Activated CD4-positive, alpha-beta memory T cell treated with anti-CD3 and anti-CD28 coated beads, Interleukin-2, amount 10 ng/mL, durations not matched to agents 7 days and 5 days (primary cell): ENCODE measurements at regions of chr1 and their contacts with region 1.

Region 1: GRCh38 chr1:226407497-226408284 is at the start of gene PARP1:
- DNase-seq: peak; percentile 92
- H3K4me3 Mint-ChIP-seq: peak within 1 kb of the TSS; percentile 85
- H3K27ac Mint-ChIP-seq: peak within 1 kb of the TSS; percentile 89
- H3K4me1 Mint-ChIP-seq: peaks cover 35% of the 10 kb centered on the region
- H3K27me3 Mint-ChIP-seq: peaks cover 2% of the 10 kb centered on the region
- total RNA-seq, gene PARP1: 191 to 194 TPM

Region 2: GRCh38 chr1:226308723-226309315 is 98.9 kb before region 1 on chr1 and contains the start of gene LIN9:
- CTCF ChIA-PET with region 1: interaction called, 13 read pairs
- POLR2A ChIA-PET with region 1: interaction called, 21 read pairs
- DNase-seq: peak; percentile 94
- H3K4me3 Mint-ChIP-seq: peak within 1 kb of the TSS; percentile 89
- H3K27ac Mint-ChIP-seq: peak within 1 kb of the TSS; percentile 87
- H3K4me1 Mint-ChIP-seq: peaks cover 32% of the 10 kb centered on the region
- H3K27me3 Mint-ChIP-seq: peaks cover 13% of the 10 kb centered on the region
- total RNA-seq, gene LIN9: 10.4 to 11.5 TPM

Region 3: DNA sequence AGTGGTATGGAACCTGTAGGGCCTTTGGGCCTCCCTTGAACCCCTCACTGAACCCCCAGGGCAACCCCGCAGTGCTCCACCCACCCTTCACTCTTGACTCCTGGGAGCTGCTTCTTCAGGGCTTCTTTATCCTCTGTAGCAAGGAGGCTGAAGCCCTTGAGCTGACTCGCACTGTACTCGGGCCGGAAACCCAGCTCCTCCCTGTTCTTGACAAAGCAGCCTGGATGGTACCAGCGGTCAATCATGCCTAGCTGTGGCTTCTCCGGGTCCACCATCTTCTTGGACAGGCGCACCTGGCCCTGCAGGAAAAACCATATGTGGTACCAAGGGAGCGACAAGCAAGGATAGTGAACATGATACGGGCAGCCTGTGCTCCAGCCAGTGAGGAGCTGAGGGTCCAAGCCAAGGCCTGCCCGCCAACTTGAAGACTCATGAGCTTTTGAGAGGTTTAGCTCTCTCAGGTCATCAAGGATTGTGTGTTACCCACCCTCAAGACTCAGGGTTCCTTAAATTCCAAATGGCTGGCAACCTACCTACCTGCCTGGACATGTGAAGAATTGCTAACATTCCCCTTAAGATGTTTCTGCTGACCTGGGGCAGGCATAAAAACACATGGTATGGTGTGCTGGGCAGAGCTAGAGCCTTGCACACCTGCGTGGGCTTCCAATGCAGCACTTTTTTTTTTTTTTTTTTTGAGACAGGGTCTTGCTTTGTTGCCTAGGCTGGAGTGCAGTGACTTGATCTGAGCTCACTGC is 17.2 kb before region 1 on chr1:
- CTCF ChIA-PET with region 1: interaction called, 13 read pairs
- POLR2A ChIA-PET with region 1: interaction called, 29 read pairs
- DNase-seq: no peak
- H3K4me3 Mint-ChIP-seq: no peak overlapping the region
- H3K27ac Mint-ChIP-seq: no peak overlapping the region
- H3K4me1 Mint-ChIP-seq: peaks cover 4% of the 10 kb centered on the region
- H3K27me3 Mint-ChIP-seq: no peaks in the 10 kb centered on the region

Region 4: DNA sequence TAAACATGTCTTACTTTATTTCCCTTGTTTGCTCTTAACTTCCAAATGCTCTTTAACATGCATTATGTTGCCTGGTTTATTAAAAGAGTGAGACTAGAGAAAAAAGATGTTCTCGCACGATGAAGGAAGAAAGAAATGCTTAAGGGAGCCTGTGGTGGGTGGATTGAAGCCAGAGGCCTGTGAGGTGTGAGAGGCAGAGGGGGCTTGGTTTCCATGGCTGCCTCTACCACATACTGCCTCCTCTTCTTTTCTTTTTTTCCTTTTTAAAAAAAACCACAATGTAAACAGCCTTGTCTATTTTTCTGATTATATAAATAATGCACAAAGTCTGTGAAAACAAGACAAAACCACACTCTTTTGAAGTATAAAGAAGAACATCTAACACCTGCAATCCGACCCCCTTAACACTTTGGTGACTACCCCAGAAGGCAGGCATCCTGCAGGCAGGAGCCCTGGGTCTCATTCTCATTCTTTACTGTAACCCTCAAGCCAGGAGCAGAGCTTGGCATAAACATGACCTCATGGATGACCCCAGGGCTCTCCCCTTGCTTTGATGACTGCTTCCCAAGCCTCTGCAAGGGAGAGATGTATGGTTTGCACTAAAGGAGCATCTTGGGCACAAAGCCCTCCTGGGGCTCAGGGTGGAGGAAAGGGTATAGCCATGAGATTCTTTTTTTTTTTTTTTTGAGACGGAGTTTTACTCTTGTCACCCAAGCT is 10.3 kb after region 1 on chr1:
- CTCF ChIA-PET with region 1: interaction called, 69 read pairs
- POLR2A ChIA-PET with region 1: interaction called, 15 read pairs
- DNase-seq: no peak
- H3K4me3 Mint-ChIP-seq: no peak overlapping the region
- H3K27ac Mint-ChIP-seq: no peak overlapping the region
- H3K4me1 Mint-ChIP-seq: peaks cover 3% of the 10 kb centered on the region
- H3K27me3 Mint-ChIP-seq: peaks cover 9% of the 10 kb centered on the region

Region 5: DNA sequence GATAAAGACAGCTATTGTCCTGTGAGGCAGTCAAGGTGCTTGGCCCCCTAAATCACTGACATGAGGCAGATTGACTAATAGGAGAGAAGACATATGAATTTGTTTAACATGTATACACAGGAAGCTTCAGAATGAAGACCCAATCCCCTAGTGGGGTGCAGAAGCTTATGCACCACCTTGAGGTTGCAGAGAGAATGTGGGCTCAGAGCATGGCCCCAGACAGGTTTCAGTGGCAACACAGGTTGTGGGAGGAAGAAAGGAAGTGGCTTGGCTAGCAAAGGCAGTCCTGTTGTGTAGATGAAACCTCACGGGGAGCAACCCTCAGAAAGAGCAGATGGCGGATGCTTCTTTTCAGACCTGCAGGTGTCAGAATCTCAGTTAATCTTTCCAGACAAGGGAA is 37.2 kb after region 1 on chr1:
- CTCF ChIA-PET with region 1: interaction called, 41 read pairs
- POLR2A ChIA-PET with region 1: interaction called, 26 read pairs
- DNase-seq: peak; percentile 83
- H3K4me3 Mint-ChIP-seq: no peak overlapping the region
- H3K27ac Mint-ChIP-seq: peak overlapping the region; percentile 27
- H3K4me1 Mint-ChIP-seq: peaks cover 31% of the 10 kb centered on the region
- H3K27me3 Mint-ChIP-seq: peaks cover 21% of the 10 kb centered on the region

Region 6: DNA sequence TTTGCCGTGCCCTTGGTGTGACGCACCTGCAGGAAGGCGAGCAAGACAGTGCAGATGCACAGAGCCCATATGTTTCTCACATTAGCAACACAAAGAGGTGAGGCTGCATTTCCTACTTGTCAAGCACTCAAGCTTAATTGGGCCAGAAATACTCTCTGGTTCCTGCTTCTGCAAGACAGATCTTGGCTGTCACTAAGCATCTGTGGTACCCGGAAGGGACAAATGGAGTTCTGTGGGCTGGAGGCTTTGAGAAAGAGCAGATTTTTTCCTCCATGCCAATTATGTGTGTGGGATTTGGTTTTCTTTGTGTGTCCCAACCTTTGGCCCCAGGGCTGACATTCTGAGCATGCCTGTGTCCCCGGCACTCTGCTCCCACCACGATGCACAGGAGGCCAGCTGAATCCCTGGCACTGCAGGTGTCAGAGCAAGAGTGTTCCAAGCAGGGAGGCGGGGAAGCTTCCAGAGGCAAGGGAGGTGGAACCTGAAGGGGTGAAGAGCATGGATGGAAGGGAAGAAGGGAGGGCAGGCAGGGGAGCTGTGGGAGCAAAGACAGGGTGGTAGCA is 88.8 kb after region 1 on chr1:
- CTCF ChIA-PET with region 1: no interaction called
- POLR2A ChIA-PET with region 1: no interaction called
- DNase-seq: no peak
- H3K4me3 Mint-ChIP-seq: no peak overlapping the region
- H3K27ac Mint-ChIP-seq: no peak overlapping the region
- H3K4me1 Mint-ChIP-seq: no peaks in the 10 kb centered on the region
- H3K27me3 Mint-ChIP-seq: peaks cover 16% of the 10 kb centered on the region

Region 7: DNA sequence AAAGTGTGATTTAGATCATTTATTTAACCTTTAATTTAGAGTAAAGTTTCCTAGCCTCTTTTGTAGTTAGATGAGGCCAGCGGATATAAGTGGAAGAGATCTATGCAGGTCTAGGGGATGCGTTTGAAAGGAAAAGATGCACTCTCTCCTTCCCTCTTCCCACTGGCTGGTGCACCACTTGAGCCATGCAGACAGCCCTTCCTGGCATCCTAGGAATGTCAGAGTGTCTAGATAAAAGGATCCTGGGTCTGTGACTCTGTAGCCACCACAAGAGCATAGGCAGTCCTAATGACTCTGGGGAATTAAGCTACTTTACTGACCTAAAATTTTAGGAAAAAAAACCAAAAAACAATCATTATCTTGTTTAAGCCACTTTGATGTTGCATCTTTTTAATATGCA is 124.9 kb after region 1 on chr1:
- CTCF ChIA-PET with region 1: no interaction called
- POLR2A ChIA-PET with region 1: no interaction called
- DNase-seq: no peak
- H3K4me3 Mint-ChIP-seq: no peak overlapping the region
- H3K27ac Mint-ChIP-seq: no peak overlapping the region
- H3K4me1 Mint-ChIP-seq: no peaks in the 10 kb centered on the region
- H3K27me3 Mint-ChIP-seq: peaks cover 12% of the 10 kb centered on the region